Activated CD4-positive, alpha-beta T cell treated with anti-CD3 and anti-CD28 coated beads, Interleukin-2, amount 10 ng/mL, durations not matched to agents 7 days and 5 days (primary cell): ENCODE measurements at regions of chr11 and their contacts with region 1.

Region 1: GRCh38 chr11:15118431-15118830 is 3.7 kb downstream of the INSC start:
- DNase-seq: peak; percentile 12
- H3K4me3 Mint-ChIP-seq: no peak overlapping the region
- H3K27ac Mint-ChIP-seq: no peak overlapping the region
- H3K4me1 Mint-ChIP-seq: peaks cover 36% of the 10 kb centered on the region
- H3K27me3 Mint-ChIP-seq: peaks cover 37% of the 10 kb centered on the region

Region 2: DNA sequence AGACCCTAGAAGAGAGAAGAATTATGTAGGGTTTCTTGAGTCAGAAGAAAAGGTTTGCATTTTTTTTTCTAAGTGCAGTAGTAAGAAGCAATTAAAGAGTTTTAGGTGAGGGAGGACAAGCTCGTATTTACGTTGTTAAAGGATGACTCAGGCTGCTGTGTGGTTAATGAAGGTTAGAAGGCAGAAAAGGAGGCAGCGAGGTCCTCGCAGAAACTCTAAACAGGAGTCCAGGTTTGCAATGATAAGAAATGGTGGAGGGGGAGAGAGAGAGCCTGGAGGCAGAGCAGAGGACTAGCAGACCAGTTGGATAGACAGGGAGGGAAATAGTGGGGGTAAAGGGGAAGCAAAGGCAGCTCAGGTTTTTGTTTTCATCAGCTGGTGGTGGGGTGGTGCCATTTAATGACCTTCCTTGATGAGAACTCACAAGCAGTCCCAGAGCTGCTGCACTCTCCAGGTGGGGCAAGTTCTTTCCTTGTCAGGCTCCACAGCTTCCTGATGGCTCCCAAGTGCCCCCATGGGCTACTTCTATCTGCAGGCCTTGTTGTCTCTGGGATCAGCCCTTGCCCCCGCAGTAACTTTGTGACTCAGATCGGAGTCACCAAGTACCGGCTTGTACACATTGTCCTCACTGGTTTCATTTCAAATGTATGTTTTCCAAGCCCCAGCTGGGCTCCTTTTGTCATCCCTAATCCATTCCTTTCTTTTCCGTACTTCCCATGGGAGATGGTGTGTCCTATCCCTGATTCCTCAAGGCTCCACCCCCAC is 12.0 kb before region 1 on chr11:
- CTCF ChIA-PET with region 1: interaction called, 10 read pairs
- POLR2A ChIA-PET with region 1: no interaction called
- DNase-seq: no peak
- H3K4me3 Mint-ChIP-seq: no peak overlapping the region
- H3K27ac Mint-ChIP-seq: no peak overlapping the region
- H3K4me1 Mint-ChIP-seq: no peaks in the 10 kb centered on the region
- H3K27me3 Mint-ChIP-seq: peaks cover 1% of the 10 kb centered on the region